Activated naive CD4-positive, alpha-beta T cell treated with anti-CD3 and anti-CD28 coated beads for 36 hours (primary cell): ENCODE measurements at regions of chr15 and their contacts with region 1.

Region 1: GRCh38 chr15:35289024-35289617 is 204.0 kb upstream of the NANOGP8 start:
- DNase-seq: no peak
- H3K4me3 Mint-ChIP-seq: no peak overlapping the region
- H3K27ac Mint-ChIP-seq: no peak overlapping the region
- H3K4me1 Mint-ChIP-seq: no peaks in the 10 kb centered on the region
- H3K27me3 Mint-ChIP-seq: no peaks in the 10 kb centered on the region

Region 2: GRCh38 chr15:35266030-35266429 is 23.1 kb before region 1 on chr15:
- CTCF ChIA-PET with region 1: no interaction called
- intact Hi-C with region 1: no loop called
- DNase-seq: no peak
- H3K4me3 Mint-ChIP-seq: no peak overlapping the region
- H3K27ac Mint-ChIP-seq: no peak overlapping the region
- H3K4me1 Mint-ChIP-seq: no peaks in the 10 kb centered on the region
- H3K27me3 Mint-ChIP-seq: no peaks in the 10 kb centered on the region

Region 3: GRCh38 chr15:35427091-35427490 is 138.0 kb after region 1 on chr15:
- CTCF ChIA-PET with region 1: no interaction called
- intact Hi-C with region 1: no loop called
- DNase-seq: no peak
- H3K4me3 Mint-ChIP-seq: no peak overlapping the region
- H3K27ac Mint-ChIP-seq: no peak overlapping the region
- H3K4me1 Mint-ChIP-seq: no peaks in the 10 kb centered on the region
- H3K27me3 Mint-ChIP-seq: no peaks in the 10 kb centered on the region

Region 4: DNA sequence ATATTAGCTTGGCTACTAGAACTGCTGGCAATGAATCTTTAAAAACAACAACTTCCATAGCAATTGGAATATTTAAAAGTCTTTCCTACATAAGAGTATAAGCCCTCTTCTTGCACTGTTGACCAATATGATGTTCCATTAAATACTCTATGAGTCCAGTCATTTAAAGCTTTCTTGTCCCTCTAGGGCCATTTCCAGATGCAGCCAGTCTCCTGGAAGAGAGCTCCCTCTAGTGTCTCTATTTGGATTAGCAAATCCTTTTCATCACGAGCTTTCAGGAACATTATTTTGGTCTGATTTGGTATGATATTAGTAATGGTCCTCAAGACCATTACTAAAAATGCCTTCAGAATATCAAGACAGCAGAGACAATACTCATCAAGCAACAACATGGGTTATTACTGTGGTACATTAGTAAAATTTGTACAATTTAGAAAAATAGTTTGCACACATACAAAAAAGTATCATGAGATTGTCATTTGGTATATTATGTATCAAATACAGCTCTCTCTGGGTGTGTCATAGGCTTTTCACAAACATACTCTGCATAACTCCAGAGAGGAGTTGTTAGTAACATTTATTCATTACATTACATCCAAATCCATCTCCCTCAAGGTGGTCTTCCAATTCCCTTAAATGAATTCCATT is 155.6 kb after region 1 on chr15:
- CTCF ChIA-PET with region 1: interaction called, 21 read pairs
- intact Hi-C with region 1: loop called (anchors 1 kb)
- DNase-seq: no peak
- H3K4me3 Mint-ChIP-seq: no peak overlapping the region
- H3K27ac Mint-ChIP-seq: no peak overlapping the region
- H3K4me1 Mint-ChIP-seq: no peaks in the 10 kb centered on the region
- H3K27me3 Mint-ChIP-seq: no peaks in the 10 kb centered on the region